Left lung (tissue), 14 donors: ENCODE measurements at regions of chr1 and their contacts with region 1.

Region 1: DNA sequence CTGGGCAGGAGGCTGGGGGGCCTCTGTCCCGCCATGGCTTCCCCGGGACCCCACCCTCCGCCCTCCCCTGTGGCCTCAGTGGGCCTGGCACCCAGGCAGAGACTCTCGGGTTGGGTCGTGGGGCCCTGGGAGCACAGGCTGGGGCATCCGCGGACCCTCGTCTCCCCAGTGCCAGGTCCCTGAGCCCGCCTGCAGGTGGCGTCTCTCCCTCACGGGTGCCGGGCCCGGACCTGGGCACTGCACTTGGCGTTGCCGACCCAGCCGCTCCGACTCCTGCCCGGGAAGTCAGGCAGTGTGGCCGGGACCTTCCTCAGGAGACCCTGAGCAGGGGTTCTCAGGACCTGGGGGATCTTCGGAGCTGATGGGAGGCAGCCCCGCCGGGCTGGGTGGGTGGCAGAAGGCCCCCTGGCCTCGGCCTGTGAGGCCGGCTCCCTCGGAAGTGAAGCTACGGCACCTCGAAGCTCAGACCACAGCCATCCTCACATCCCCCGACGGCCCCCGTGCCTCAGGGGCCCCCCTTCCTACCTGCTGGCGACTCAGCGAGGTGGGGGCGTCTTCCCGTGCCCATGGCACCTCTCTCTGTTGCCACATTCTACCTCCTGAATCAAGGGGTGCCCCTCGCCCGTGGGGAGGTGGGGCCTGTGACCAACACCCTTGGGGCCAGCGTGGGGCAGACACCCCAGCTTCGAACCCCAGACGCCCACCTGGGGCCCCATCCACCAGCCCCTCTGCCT is 6.4 kb upstream of the C1orf159 start:
- DNase-seq: peak in 3 of 4 donors; percentile 78 to 96 (median 84)
- ATAC-seq: peak; percentile 93
- H3K4me3 ChIP-seq: no peak overlapping the region
- H3K27ac ChIP-seq: no peak overlapping the region
- H3K4me1 ChIP-seq: peaks cover 0 to 14% of the 10 kb centered on the region in 2 donors
- H3K27me3 ChIP-seq: peaks cover 0 to 47% of the 10 kb centered on the region in 2 donors
- CTCF ChIP-seq: peak; percentile 82 to 91

Region 2: DNA sequence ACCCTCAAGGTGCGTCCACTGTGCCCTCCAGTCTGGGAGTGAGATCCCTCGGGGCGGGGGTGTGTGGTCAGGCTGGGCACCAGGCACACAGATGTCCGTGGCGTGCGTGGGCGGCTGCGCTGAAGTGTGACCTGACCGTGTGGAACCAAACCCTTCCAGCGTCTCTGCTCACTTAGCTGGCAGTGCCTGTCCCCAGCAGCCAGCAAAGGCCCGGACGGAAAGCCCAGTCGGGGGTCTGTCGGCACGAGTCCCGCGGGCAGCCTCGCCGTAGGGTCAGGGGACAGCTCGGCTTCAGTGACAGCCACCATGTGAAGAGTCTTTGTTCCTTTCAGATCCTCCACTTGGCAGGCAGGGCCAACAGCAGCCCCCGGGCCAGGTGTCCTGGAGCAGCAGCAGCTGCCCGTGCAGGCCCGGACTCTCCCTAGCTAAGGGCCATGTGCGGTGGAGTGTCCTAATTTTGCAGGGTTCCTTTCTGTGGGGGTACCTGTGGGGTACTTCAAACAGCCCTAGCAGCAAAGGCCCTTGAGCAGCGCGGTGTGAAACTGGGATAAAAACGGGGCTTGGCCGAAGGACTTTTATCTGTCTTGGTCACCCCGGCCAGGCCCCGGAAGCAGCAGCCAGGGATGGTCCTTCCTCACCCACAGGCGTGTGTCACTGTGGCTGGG is 63.0 kb after region 1 on chr1:
- intact Hi-C with region 1: no loop called
- DNase-seq: peak in 1 of 4 donors; percentile 71
- ATAC-seq: no peak
- H3K4me3 ChIP-seq: no peak overlapping the region
- H3K27ac ChIP-seq: no peak overlapping the region
- H3K4me1 ChIP-seq: no peaks in the 10 kb centered on the region
- H3K27me3 ChIP-seq: peaks cover 0 to 13% of the 10 kb centered on the region in 2 donors
- CTCF ChIP-seq: no peak

Region 3: DNA sequence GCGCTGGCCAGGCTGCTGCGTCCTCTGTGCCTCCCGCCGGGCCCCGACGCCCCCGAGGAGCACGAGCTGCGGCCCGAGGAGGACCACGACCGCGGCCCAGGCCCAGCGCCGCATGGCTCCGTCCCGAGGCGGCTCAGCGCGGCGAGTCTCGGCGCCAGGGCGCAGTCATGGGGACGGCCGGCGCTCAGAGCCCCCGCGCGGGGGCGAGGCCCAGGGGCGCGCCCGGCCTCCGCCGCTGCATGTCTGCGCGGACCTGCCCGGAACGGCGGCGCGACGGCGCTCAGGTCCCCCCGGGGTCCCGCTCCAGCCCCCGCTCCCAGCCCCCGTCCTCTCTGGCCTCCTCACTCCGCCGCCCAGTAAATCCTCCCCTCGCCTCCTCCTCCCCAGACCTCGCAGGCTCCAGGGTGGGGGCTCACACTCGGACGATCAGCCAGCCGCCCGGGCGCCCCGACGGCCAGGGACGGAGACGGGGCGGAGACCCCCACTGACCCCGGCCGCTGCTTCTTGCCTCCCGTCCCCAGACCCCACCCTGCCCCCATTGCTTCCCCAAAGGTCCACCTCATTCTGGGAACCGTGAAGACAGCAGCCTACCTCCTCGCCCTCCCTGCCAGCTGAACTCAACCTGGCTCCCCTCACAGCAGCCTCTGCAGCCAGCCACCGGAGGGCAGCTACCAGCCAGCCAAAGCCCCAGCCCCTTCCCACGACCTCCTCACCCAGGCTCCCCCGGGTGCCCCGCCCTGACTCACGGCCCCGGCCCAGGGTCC is 124.5 kb after region 1 on chr1 and contains the start of gene C1QTNF12:
- intact Hi-C with region 1: loop called in 1 of 2 experiments (anchors 10 kb)
- DNase-seq: no peak
- ATAC-seq: no peak
- H3K4me3 ChIP-seq: no peak within 1 kb of the TSS
- H3K27ac ChIP-seq: no peak within 1 kb of the TSS
- H3K4me1 ChIP-seq: peaks cover 0 to 11% of the 10 kb centered on the region in 2 donors
- H3K27me3 ChIP-seq: peaks cover 16 to 53% of the 10 kb centered on the region in 2 donors
- CTCF ChIP-seq: no peak
- polyA plus RNA-seq, gene C1QTNF12: 0.52 to 1.4 (median 0.78) TPM

Region 4: DNA sequence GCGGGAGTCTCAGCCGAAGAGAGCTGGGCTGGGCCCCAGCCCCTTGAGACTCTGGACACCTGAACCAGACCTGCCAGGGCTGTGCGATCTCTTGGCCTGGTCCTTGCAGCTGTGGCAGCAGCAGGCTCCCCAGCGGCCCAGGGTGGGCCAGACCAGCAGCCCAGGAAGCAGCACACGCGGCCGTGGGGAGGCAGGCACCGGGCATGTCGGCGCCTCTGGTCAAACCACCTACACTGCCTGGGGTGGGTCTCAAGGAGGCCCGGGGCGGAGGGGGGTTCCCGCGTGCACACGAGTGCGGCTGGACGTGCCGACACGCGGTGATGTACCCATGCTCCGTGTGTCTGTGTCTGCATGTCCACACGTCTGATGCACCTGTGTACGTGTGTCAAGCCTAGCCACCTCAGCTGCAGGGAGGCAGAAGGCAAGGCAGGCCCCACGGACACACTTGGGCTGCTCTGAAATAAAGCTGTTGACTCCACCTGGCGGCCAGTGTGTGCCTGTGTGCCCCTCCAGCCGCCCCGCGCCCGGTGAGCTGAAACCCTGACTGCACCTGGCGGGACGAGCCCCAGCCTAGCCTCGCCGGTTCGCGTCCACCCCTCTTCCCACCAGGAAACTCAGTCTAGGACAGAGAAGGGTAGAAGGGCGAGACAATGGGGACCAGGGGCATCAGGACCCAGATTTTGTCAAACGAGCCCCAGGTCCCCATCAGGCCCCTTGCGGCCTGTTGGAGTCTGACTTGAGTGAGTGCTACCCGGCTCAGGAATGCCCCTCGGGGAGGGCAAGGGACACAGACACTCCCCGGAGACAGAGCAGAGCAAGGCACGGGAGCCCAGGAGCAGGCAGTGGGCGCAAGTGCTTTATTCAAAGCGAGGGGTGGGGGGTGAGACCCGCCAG is 169.6 kb after region 1 on chr1:
- intact Hi-C with region 1: loop called in 1 of 2 experiments (anchors 10 kb)
- DNase-seq: peak in 3 of 4 donors; percentile 39 to 76 (median 65)
- ATAC-seq: peak; percentile 86
- H3K4me3 ChIP-seq: no peak overlapping the region
- H3K27ac ChIP-seq: no peak overlapping the region
- H3K4me1 ChIP-seq: no peaks in the 10 kb centered on the region
- H3K27me3 ChIP-seq: peaks cover under 1 to 12% of the 10 kb centered on the region in 2 donors
- CTCF ChIP-seq: peak; percentile 53 to 75